ENCODE measurements at regions of chr5 and their contacts with region 1.

Region 1: GRCh38 chr5:80407735-80408482 is at the start of gene ZFYVE16:
- DNase-seq: peak; percentile 89 to 97
- H3K4me3 ChIP-seq: peak within 1 kb of the TSS; percentile 83
- H3K27ac ChIP-seq: peak within 1 kb of the TSS; percentile 83
- H3K4me1 ChIP-seq: peaks cover 18% of the 10 kb centered on the region
- H3K27me3 ChIP-seq: no peaks in the 10 kb centered on the region
- CTCF ChIP-seq: peak; percentile 47; the same call in 1 of the 2 replicates
- total RNA-seq, gene ZFYVE16: 27.7 and 34.4 TPM in 2 replicates

Region 2: DNA sequence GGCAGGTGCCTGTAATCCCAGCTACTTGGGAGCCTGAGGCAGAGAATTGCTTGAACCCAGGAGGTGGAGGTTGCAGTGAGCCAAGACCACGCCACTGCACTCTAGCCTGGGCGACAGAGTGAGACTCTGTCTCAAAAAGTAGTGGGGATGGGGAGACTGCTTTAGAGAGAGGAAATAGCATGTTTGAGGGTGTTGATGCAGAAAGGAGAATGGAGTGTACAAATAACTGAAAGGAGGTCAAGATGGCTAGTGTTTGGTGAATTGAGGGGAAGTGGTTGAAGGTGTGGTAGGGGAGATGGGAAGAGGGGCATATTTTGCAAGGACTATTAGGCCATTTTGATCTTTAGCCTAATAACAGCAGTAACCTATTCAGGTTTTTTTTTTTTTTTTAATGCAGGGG is 777.5 kb before region 1 on chr5:
- CTCF ChIA-PET with region 1: no interaction called
- POLR2A ChIA-PET with region 1: interaction called, 12 read pairs
- intact Hi-C with region 1: no loop called
- DNase-seq: no peak
- H3K4me3 ChIP-seq: no peak overlapping the region
- H3K27ac ChIP-seq: no peak overlapping the region
- H3K4me1 ChIP-seq: no peaks in the 10 kb centered on the region
- H3K27me3 ChIP-seq: no peaks in the 10 kb centered on the region
- CTCF ChIP-seq: no peak

Region 3: DNA sequence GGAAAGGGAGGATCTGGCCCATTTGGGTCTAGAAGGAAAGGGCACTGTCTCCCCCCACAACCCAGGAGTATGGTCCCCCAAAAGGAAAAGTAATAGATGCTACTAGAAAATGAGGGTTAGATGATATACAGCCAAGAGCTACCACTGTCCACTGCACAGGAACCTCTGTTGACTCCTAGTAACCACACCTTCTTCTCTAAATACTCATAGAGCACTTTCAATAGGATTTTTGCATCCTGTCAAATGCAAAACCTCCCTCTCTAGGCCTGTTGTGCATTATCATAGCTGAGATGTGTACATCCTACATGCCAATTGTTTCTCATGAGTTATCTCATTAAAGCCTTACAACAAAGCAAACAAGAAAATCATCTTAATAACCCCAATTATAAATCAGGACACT is 305.9 kb before region 1 on chr5:
- CTCF ChIA-PET with region 1: no interaction called
- POLR2A ChIA-PET with region 1: interaction called, 13 read pairs
- intact Hi-C with region 1: no loop called
- DNase-seq: no peak
- H3K4me3 ChIP-seq: no peak overlapping the region
- H3K27ac ChIP-seq: no peak overlapping the region
- H3K4me1 ChIP-seq: no peaks in the 10 kb centered on the region
- H3K27me3 ChIP-seq: no peaks in the 10 kb centered on the region
- CTCF ChIP-seq: no peak

Region 4: GRCh38 chr5:80387063-80387768 is 20.7 kb before region 1 on chr5:
- CTCF ChIA-PET with region 1: no interaction called
- POLR2A ChIA-PET with region 1: interaction called, 15 read pairs
- intact Hi-C with region 1: no loop called
- DNase-seq: no peak
- H3K4me3 ChIP-seq: no peak overlapping the region
- H3K27ac ChIP-seq: no peak overlapping the region
- H3K4me1 ChIP-seq: no peaks in the 10 kb centered on the region
- H3K27me3 ChIP-seq: no peaks in the 10 kb centered on the region
- CTCF ChIP-seq: no peak

Region 5: DNA sequence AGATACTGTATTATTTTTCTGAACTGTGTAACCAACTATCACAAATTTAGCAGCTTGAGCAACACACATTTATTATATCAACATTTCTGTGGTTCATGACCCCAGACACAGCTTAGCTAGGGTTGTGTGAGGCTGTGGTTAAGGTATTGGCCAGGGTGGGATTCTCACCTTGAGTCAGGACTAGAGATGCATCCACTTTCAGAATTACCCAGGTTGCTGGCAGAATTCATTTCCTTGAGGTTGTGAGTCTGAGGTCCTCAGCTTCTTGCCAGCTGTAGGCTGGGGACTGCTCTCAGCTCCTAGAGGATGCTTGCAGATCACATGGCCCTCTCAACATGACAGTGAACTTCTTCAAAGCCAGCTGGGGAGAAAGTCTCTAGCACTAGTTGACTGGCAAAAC is 429.8 kb after region 1 on chr5:
- CTCF ChIA-PET with region 1: no interaction called
- POLR2A ChIA-PET with region 1: no interaction called
- intact Hi-C with region 1: no loop called
- DNase-seq: no peak
- H3K4me3 ChIP-seq: no peak overlapping the region
- H3K27ac ChIP-seq: no peak overlapping the region
- H3K4me1 ChIP-seq: no peaks in the 10 kb centered on the region
- H3K27me3 ChIP-seq: no peaks in the 10 kb centered on the region
- CTCF ChIP-seq: no peak

Measured in PC-9 (cell line).